H1 (cell line): ENCODE measurements at regions of chr3 and their contacts with region 1.

Region 1: DNA sequence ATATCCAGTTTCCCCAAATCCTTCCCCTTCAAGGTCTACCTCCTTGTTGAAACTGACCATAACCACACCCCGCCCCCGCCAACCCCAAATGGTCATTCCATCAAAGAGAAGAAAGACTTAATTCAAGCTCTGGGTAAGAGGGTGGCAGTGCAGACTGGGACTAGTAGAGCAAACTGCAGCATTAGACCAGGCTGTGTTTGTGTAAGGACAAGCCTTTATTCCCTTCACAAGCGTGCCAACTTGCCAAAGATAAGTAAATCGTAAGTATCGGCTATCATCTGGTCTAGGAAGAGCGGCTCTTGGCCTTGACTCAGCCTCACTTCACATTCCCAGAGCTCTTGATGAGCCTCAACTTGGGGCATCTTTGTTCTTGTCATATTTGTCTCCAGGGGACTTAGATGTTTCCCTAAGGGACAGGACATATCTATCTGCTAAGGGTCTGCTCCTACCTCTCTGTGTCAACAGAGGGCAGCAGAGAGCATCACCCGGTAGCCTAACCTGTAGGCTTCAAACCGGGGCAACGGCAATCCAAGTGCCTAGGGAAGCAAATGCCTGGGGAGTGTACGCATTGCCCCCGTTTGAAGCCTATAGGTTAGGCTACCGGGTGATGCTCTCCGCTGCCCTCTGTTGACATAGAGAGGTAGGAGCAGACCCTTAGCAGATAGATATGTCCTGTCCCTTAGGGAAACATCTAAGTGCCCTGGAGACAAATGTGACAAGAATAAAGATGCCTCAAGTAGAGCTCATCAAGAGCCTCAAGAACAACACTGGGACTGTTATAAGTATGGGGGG is 8.9 kb upstream of the MAP3K13 start:
- DNase-seq: peak; percentile 84 to 91
- H3K4me3 ChIP-seq: no peak overlapping the region
- H3K27ac ChIP-seq: no peak overlapping the region
- H3K4me1 ChIP-seq: no peaks in the 10 kb centered on the region
- H3K27me3 ChIP-seq: no peaks in the 10 kb centered on the region
- CTCF ChIP-seq: peak; percentile 56 to 81 (median 73)
- EP300 ChIP-seq: no peak
- POLR2A ChIP-seq: no peak
- RAD21 ChIP-seq: peak; percentile 33 to 66; a peak in 3 of 4 replicates

Region 2: GRCh38 chr3:185290266-185290665 is 63.8 kb before region 1 on chr3:
- CTCF ChIA-PET with region 1: no interaction called
- POLR2A ChIA-PET with region 1: no interaction called
- DNase-seq: no peak
- H3K4me3 ChIP-seq: no peak overlapping the region
- H3K27ac ChIP-seq: no peak overlapping the region
- H3K4me1 ChIP-seq: no peaks in the 10 kb centered on the region
- H3K27me3 ChIP-seq: no peaks in the 10 kb centered on the region
- CTCF ChIP-seq: no peak
- EP300 ChIP-seq: no peak
- POLR2A ChIP-seq: no peak
- RAD21 ChIP-seq: no peak

Region 3: DNA sequence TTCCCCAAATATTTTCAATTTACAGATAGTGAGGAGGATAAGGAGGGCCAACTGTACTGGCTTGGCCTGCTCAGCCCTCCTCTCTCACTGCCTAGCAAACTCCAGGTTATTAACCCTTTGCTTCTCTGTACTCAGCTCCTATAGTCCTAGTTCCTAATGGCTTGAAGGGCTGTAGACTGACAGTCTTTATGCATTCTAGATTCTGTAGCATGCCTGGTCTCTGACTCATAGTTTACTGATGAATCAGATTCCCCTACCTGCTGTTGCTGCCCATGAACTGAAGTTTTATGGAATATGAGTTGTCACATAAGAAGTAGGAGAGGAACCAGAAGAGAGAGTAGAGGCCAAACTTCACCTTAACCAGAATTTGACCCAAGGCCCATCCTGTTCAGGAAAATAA is 18.2 kb before region 1 on chr3:
- CTCF ChIA-PET with region 1: interaction called, 10 read pairs
- POLR2A ChIA-PET with region 1: no interaction called
- DNase-seq: no peak
- H3K4me3 ChIP-seq: no peak overlapping the region
- H3K27ac ChIP-seq: no peak overlapping the region
- H3K4me1 ChIP-seq: no peaks in the 10 kb centered on the region
- H3K27me3 ChIP-seq: no peaks in the 10 kb centered on the region
- CTCF ChIP-seq: no peak
- EP300 ChIP-seq: no peak
- POLR2A ChIP-seq: no peak
- RAD21 ChIP-seq: no peak

Region 4: DNA sequence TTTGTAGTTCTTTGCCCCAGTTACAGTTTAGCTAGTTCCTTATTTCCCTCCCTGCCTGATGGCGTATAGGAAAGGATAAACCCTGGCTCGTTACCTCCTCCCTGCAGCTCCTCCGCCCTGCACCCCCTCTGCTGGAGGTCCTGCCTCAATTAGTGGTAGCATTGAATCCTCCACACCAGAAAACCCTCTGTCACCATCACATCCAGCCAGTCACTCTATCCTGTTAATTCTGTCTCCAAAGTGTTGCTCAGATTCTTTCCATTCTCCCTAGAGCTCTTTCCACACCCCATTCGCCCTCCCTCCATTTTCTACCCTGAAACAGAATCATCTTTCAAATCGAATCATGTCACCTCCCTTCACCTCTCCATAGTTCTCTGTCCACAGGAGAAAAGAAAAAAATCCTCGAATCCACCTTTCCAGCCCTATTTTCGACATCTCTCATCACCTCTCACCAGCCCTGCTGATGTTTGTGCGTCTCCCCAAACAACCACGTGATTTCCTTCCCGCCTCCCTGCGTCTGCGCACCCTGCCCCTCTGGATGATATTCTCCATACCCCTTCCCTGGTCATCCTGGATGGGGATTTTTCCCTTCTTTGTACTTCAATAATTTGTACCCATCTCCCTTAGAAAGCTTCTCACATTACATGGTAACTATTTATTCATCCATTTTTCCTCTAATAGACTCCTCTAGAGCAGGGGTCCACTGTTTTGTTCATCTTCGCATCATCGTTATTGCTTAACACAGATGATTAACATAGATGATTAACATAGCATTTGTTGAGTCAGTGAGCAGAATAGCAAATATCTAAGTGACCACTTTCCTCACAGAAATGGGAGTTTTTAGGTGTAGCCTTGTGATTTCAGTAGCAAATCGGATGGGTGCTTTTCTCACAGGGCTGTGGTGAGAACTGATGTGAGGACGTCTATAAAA is 46.0 kb after region 1 on chr3:
- CTCF ChIA-PET with region 1: interaction called, 11 read pairs
- POLR2A ChIA-PET with region 1: no interaction called
- DNase-seq: no peak
- H3K4me3 ChIP-seq: no peak overlapping the region
- H3K27ac ChIP-seq: no peak overlapping the region
- H3K4me1 ChIP-seq: no peaks in the 10 kb centered on the region
- H3K27me3 ChIP-seq: no peaks in the 10 kb centered on the region
- CTCF ChIP-seq: no peak
- EP300 ChIP-seq: no peak
- POLR2A ChIP-seq: no peak
- RAD21 ChIP-seq: no peak